ENCODE measurements at regions of chr2 and their contacts with region 1.

Region 1: DNA sequence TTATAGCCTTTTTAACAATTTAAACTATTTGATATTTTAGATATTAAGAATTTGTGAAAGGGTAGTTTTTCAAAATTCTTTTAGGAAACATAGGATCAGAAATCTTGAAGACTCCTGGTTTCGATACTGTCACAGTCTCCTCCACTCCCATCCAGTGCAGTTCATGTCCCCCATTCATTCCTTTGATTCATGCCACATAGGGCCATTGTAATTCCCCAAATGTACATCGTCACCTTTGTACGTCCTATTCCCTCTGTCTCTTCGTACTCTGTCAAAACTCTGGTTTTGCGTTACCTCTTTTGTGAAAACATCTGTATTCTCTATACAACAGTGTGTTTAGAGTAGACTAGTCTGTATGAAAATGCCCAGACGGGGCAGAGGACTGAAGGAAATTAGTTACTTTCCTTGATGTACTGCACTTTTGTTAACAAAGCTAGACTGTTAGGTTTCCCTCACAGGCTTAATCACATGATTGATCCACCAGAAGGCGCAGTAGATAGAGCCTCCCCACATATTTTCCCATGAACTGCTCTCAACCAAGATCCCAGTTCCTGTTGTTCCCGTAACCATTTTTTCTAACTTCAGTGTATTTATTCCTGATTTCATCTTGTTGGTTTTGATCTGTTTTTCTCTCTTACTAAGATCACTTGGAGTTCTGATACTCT is 2.5 kb downstream of the MRPL35 start:
- DNase-seq: no peak
- ATAC-seq: no peak
- H3K4me3 ChIP-seq: no peak overlapping the region
- H3K27ac ChIP-seq: no peak overlapping the region
- H3K4me1 ChIP-seq: peaks cover 7% of the 10 kb centered on the region
- H3K27me3 ChIP-seq: no peaks in the 10 kb centered on the region
- CTCF ChIP-seq: no peak

Region 2: DNA sequence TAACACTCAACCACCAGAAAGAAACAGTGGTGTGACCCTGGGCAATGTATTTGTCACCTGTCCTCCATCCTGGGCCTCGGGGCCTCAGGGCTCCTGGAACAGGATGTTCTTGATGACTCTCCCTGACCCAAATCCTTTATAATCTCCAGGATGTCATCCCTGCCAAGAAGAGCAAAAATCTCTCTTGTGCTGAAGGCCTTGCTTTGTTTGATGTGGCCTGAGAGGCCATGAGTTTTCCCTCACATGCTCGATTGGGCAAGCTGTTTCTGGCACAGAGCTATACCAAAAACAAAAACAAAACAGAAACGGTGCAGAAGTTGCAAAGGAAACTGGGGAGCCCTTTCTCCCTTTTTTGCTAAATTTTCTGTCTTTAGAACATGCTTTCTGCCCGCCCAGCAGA is 277.3 kb before region 1 on chr2:
- intact Hi-C with region 1: no loop called
- DNase-seq: no peak
- ATAC-seq: peak; percentile 63
- H3K4me3 ChIP-seq: no peak overlapping the region
- H3K27ac ChIP-seq: peak overlapping the region; percentile 60
- H3K4me1 ChIP-seq: peaks cover 12% of the 10 kb centered on the region
- H3K27me3 ChIP-seq: no peaks in the 10 kb centered on the region
- CTCF ChIP-seq: no peak

Region 3: GRCh38 chr2:86352137-86352726 is 150.4 kb after region 1 on chr2:
- intact Hi-C with region 1: no loop called
- DNase-seq: no peak
- ATAC-seq: no peak
- H3K4me3 ChIP-seq: no peak overlapping the region
- H3K27ac ChIP-seq: no peak overlapping the region
- H3K4me1 ChIP-seq: no peaks in the 10 kb centered on the region
- H3K27me3 ChIP-seq: no peaks in the 10 kb centered on the region
- CTCF ChIP-seq: no peak

Region 4: GRCh38 chr2:86453836-86454235 is 252.0 kb after region 1 on chr2:
- intact Hi-C with region 1: loop called (anchors 5 kb)
- DNase-seq: no peak
- ATAC-seq: no peak
- H3K4me3 ChIP-seq: no peak overlapping the region
- H3K27ac ChIP-seq: no peak overlapping the region
- H3K4me1 ChIP-seq: peaks cover 3% of the 10 kb centered on the region
- H3K27me3 ChIP-seq: no peaks in the 10 kb centered on the region
- CTCF ChIP-seq: no peak